PC-9 (cell line): ENCODE measurements at regions of chr1 and their contacts with region 1.

Region 1: GRCh38 chr1:18883636-18884418 is 18.5 kb downstream of the ALDH4A1 start:
- DNase-seq: peak in 1 of 2 experiments; percentile 62
- H3K4me3 ChIP-seq: no peak overlapping the region
- H3K27ac ChIP-seq: no peak overlapping the region
- H3K4me1 ChIP-seq: no peaks in the 10 kb centered on the region
- H3K27me3 ChIP-seq: no peaks in the 10 kb centered on the region
- CTCF ChIP-seq: peak; percentile 89

Region 2: GRCh38 chr1:19096036-19096833 is 212.4 kb after region 1 on chr1:
- CTCF ChIA-PET with region 1: interaction called, 5 read pairs
- POLR2A ChIA-PET with region 1: no interaction called
- intact Hi-C with region 1: loop called (anchors 1 kb)
- DNase-seq: peak in 1 of 2 experiments; percentile 49
- H3K4me3 ChIP-seq: no peak overlapping the region
- H3K27ac ChIP-seq: no peak overlapping the region
- H3K4me1 ChIP-seq: no peaks in the 10 kb centered on the region
- H3K27me3 ChIP-seq: no peaks in the 10 kb centered on the region
- CTCF ChIP-seq: peak; percentile 53; the same call in 1 of the 2 replicates

Region 3: GRCh38 chr1:19113697-19114092 is 229.9 kb after region 1 on chr1:
- CTCF ChIA-PET with region 1: interaction called, 4 read pairs
- POLR2A ChIA-PET with region 1: no interaction called
- intact Hi-C with region 1: loop called (anchors 1 kb)
- DNase-seq: peak; percentile 36 to 63
- H3K4me3 ChIP-seq: no peak overlapping the region
- H3K27ac ChIP-seq: no peak overlapping the region
- H3K4me1 ChIP-seq: no peaks in the 10 kb centered on the region
- H3K27me3 ChIP-seq: no peaks in the 10 kb centered on the region
- CTCF ChIP-seq: peak; percentile 54

Region 4: GRCh38 chr1:19240673-19241538 is 357.1 kb after region 1 on chr1:
- CTCF ChIA-PET with region 1: no interaction called
- POLR2A ChIA-PET with region 1: no interaction called
- intact Hi-C with region 1: loop called (anchors 1 kb)
- DNase-seq: peak; percentile 37 to 45
- H3K4me3 ChIP-seq: no peak overlapping the region
- H3K27ac ChIP-seq: no peak overlapping the region
- H3K4me1 ChIP-seq: no peaks in the 10 kb centered on the region
- H3K27me3 ChIP-seq: no peaks in the 10 kb centered on the region
- CTCF ChIP-seq: peak; percentile 84